Prostate gland (tissue), 2 donors: ENCODE measurements at regions of chr11 and their contacts with region 1.

Region 1: GRCh38 chr11:17077520-17078401 is at the start of gene RPS13:
- DNase-seq: peak; percentile 98
- H3K4me3 ChIP-seq: peak within 1 kb of the TSS; percentile 75 to 92
- H3K27ac ChIP-seq: peak within 1 kb of the TSS; percentile 86 to 87
- H3K4me1 ChIP-seq: no peaks in the 10 kb centered on the region
- H3K27me3 ChIP-seq: no peaks in the 10 kb centered on the region
- CTCF ChIP-seq: no peak
- POLR2A ChIP-seq: peak; percentile 68
- total RNA-seq, gene RPS13: 882 to 1,308 TPM

Region 2: DNA sequence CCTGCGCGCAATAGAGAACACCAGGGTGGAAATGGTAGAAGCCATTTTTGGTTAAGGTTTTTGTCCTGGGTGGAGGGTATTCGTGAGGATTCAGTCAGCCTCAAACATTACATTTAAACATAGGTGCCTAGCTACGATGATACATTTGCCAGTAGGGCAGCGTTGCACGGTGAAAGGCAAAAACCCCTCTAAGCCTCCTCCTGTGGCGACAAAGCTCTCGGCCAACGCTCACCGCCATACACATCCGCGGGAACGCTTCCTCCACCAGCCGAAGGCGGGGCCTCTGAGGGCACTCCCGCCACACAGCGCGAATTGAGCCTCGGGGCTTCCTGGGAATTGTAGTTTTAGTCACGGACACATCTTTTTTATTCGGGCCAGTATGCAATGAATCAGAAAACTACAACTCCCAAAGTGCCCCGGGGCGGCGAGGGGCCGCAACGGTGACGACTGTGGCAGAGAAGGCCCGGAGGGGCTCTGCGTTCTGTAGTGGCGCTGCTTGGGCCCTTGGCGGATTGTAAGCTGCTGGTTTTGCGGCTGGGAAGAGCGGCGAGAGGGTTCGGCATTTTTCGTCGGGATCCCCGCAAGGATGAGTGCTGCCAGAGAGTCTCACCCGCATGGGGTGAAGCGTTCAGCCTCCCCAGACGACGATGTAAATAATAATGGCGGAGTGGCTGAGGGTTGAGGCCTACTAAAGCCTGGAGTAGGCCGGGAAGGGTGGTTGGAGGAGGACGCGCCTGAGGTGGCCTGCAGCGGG is 339.4 kb before region 1 on chr11 and contains the start of gene C11orf58:
- intact Hi-C with region 1: loop called (anchors 5 kb)
- DNase-seq: peak; percentile 98
- H3K4me3 ChIP-seq: peak within 1 kb of the TSS; percentile 73 to 80
- H3K27ac ChIP-seq: peak within 1 kb of the TSS; percentile 93 to 95
- H3K4me1 ChIP-seq: no peaks in the 10 kb centered on the region
- H3K27me3 ChIP-seq: no peaks in the 10 kb centered on the region
- CTCF ChIP-seq: peak in 1 of 4 experiments; percentile 11
- POLR2A ChIP-seq: peak; percentile 91
- total RNA-seq, gene C11orf58: 128 to 171 TPM

Region 3: GRCh38 chr11:17207317-17208258 is 129.8 kb after region 1 on chr11 and contains the start of gene PIK3C2A:
- intact Hi-C with region 1: loop called (anchors 2 kb)
- DNase-seq: peak; percentile 99
- H3K4me3 ChIP-seq: peak within 1 kb of the TSS; percentile 85 to 90
- H3K27ac ChIP-seq: peak within 1 kb of the TSS; percentile 99
- H3K4me1 ChIP-seq: peaks cover 6% of the 10 kb centered on the region
- H3K27me3 ChIP-seq: no peaks in the 10 kb centered on the region
- CTCF ChIP-seq: no peak
- POLR2A ChIP-seq: peak; percentile 99
- total RNA-seq, gene PIK3C2A: 66.0 to 90.0 TPM

Region 4: GRCh38 chr11:17221968-17222367 is 144.2 kb after region 1 on chr11:
- intact Hi-C with region 1: no loop called
- DNase-seq: no peak
- H3K4me3 ChIP-seq: no peak overlapping the region
- H3K27ac ChIP-seq: no peak overlapping the region
- H3K4me1 ChIP-seq: no peaks in the 10 kb centered on the region
- H3K27me3 ChIP-seq: no peaks in the 10 kb centered on the region
- CTCF ChIP-seq: no peak
- POLR2A ChIP-seq: no peak